ENCODE measurements at regions of chr7 and their contacts with region 1.

Region 1: GRCh38 chr7:45157653-45158401 is at the start of gene RAMP3:
- DNase-seq: no peak
- ATAC-seq: peak in 3 of 4 donors; percentile 27 to 44 (median 31)
- H3K4me3 ChIP-seq: peak within 1 kb of the TSS; percentile 23 to 40 (median 38)
- H3K27ac ChIP-seq: peak within 1 kb of the TSS; percentile 0 to 28 (median 11)
- H3K4me1 ChIP-seq: no peaks in the 10 kb centered on the region
- H3K27me3 ChIP-seq: no peaks in the 10 kb centered on the region
- CTCF ChIP-seq: no peak
- POLR2A ChIP-seq: no peak
- total RNA-seq, gene RAMP3: 3.6 to 25.9 (median 23.4) TPM

Region 2: GRCh38 chr7:45259966-45260646 is 102.3 kb after region 1 on chr7:
- intact Hi-C with region 1: loop called (anchors 5 to 10 kb)
- DNase-seq: peak; percentile 60 to 76 (median 66)
- ATAC-seq: peak; percentile 80 to 92 (median 88)
- H3K4me3 ChIP-seq: no peak overlapping the region
- H3K27ac ChIP-seq: no peak overlapping the region
- H3K4me1 ChIP-seq: no peaks in the 10 kb centered on the region
- H3K27me3 ChIP-seq: no peaks in the 10 kb centered on the region
- CTCF ChIP-seq: peak; percentile 91 to 96 (median 94)
- POLR2A ChIP-seq: no peak

Region 3: DNA sequence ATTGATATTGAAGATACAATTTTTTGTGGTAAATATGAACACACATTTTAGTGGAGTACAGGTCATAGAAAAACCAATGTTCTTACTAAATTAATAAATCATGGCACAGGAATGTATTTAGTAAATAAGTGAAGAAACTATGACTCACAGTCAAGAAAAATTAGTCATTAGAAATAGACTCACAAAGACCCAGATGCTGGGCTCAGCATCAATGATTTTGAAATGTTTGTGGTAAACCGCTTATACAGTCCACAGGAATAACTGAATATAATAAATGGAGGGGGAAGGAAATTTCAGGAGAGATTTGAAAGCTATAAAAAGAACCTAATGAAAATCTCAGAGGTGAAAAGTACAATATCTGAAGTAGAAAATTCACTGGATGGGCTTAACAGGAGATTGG is 278.0 kb after region 1 on chr7:
- intact Hi-C with region 1: no loop called
- DNase-seq: no peak
- ATAC-seq: no peak
- H3K4me3 ChIP-seq: no peak overlapping the region
- H3K27ac ChIP-seq: no peak overlapping the region
- H3K4me1 ChIP-seq: no peaks in the 10 kb centered on the region
- H3K27me3 ChIP-seq: no peaks in the 10 kb centered on the region
- CTCF ChIP-seq: no peak
- POLR2A ChIP-seq: no peak

Region 4: DNA sequence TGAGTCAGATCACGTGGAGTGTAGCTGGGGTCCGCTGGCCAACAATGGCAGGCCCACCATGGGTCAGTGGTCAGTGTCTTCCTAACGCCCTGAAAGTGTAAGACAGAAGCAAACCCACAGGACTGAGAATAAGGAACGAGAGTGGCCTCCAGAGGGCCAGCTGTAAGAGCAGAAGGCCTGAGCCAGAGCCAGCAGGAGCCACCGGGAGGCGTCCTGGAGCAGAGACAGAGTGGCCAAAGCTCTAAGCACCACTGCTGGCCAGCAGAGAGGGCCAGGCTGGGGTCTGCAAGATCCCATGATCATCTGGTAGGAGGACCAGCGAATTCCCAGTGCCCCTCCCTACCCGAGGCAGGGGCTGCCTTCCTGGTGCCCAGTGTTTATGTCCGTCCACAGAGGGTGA is 705.9 kb after region 1 on chr7:
- intact Hi-C with region 1: loop called in 1 of 2 experiments (anchors 10 kb)
- DNase-seq: no peak
- ATAC-seq: no peak
- H3K4me3 ChIP-seq: no peak overlapping the region
- H3K27ac ChIP-seq: no peak overlapping the region
- H3K4me1 ChIP-seq: no peaks in the 10 kb centered on the region
- H3K27me3 ChIP-seq: no peaks in the 10 kb centered on the region
- CTCF ChIP-seq: no peak
- POLR2A ChIP-seq: no peak

Measured in right lobe of liver (tissue), 6 donors.